ENCODE measurements at regions of chr13 and their contacts with region 1.

Region 1: DNA sequence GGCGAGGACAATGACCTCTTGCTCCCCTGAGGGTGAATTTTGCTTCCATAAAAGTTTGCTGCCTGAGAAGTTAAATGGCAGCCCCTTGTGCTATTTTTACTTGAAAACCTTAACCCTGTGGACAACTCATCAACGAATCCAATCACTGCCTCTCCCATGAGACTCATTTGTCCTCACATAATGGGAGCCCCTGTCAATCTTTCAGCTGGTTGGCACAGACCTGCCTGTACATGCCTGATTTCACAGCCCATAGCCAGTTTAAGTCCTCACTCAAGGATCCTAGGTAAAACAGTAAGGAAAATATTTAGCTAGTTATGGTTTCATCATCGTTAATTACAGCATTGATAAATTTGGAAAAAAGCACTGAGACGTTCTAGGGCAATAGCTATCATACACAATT is 207.4 kb downstream of the NHLRC3 start:
- DNase-seq: peak; percentile 29
- H3K27ac ChIP-seq: no peak overlapping the region
- CTCF ChIP-seq: no peak

Region 2: GRCh38 chr13:39159846-39160370 is 85.8 kb before region 1 on chr13:
- CTCF ChIA-PET with region 1: interaction called, 3 read pairs
- POLR2A ChIA-PET with region 1: interaction called, 10 read pairs
- DNase-seq: no peak
- H3K27ac ChIP-seq: no peak overlapping the region
- CTCF ChIP-seq: no peak

Region 3: GRCh38 chr13:39170711-39171110 is 75.0 kb before region 1 on chr13:
- CTCF ChIA-PET with region 1: no interaction called
- POLR2A ChIA-PET with region 1: no interaction called
- DNase-seq: no peak
- H3K27ac ChIP-seq: no peak overlapping the region
- CTCF ChIP-seq: no peak